HCT116 (cell line): ENCODE measurements at regions of chr9 and their contacts with region 1.

Region 1: GRCh38 chr9:4984621-4985385 is at the start of gene JAK2:
- DNase-seq: peak; percentile 80
- ATAC-seq: peak; percentile 89
- H3K4me3 ChIP-seq: peak within 1 kb of the TSS; percentile 67 to 68
- H3K27ac ChIP-seq: peak within 1 kb of the TSS; percentile 94
- H3K4me1 ChIP-seq: peaks cover 9 to 22% of the 10 kb centered on the region in 2 experiments
- H3K27me3 ChIP-seq: no peaks in the 10 kb centered on the region
- CTCF ChIP-seq: peak; percentile 4 to 25 (median 6); a peak in 1 of 6 replicates
- POLR2A ChIP-seq: peak; percentile 82
- RAD21 ChIP-seq: peak; percentile 48
- total RNA-seq, gene JAK2: 4.6 TPM

Region 2: DNA sequence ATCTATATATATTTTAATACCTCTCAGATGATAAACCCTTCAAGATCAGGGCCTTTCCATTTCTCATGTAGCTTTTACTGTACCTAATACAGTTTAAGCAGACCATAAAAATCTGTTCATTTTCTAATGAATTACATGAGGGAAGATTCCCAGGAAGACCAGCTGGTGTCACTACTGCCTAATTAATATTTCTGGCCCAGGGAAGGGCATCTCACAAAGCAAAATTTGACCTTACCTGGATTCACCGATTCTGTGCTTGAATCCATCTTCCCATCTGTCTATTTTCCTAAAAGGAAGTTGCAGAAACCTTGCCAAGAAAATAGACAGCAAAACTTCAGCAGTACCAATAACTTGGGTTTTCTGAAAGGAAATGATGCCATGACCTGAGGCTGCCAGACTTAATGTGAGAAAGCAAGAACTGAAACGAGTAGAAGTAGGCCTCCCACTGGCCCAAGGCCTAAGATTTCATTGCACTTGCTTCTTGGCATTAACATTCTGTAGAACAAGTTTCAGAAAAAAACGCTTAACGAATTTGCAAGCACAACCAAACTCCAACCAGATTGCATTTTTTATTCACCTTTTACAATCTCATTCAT is 602.0 kb before region 1 on chr9:
- CTCF ChIA-PET with region 1: no interaction called
- POLR2A ChIA-PET with region 1: no interaction called
- RAD21 ChIA-PET with region 1: no interaction called
- intact Hi-C with region 1: loop called (anchors 5 kb)
- DNase-seq: peak; percentile 23
- ATAC-seq: peak; percentile 75
- H3K4me3 ChIP-seq: no peak overlapping the region
- H3K27ac ChIP-seq: no peak overlapping the region
- H3K4me1 ChIP-seq: no peaks in the 10 kb centered on the region
- H3K27me3 ChIP-seq: no peaks in the 10 kb centered on the region; the same call in 1 of the 2 replicates
- CTCF ChIP-seq: peak; percentile 37 to 72 (median 70); a peak in 5 of 6 replicates
- POLR2A ChIP-seq: no peak
- RAD21 ChIP-seq: peak; percentile 86

Region 3: DNA sequence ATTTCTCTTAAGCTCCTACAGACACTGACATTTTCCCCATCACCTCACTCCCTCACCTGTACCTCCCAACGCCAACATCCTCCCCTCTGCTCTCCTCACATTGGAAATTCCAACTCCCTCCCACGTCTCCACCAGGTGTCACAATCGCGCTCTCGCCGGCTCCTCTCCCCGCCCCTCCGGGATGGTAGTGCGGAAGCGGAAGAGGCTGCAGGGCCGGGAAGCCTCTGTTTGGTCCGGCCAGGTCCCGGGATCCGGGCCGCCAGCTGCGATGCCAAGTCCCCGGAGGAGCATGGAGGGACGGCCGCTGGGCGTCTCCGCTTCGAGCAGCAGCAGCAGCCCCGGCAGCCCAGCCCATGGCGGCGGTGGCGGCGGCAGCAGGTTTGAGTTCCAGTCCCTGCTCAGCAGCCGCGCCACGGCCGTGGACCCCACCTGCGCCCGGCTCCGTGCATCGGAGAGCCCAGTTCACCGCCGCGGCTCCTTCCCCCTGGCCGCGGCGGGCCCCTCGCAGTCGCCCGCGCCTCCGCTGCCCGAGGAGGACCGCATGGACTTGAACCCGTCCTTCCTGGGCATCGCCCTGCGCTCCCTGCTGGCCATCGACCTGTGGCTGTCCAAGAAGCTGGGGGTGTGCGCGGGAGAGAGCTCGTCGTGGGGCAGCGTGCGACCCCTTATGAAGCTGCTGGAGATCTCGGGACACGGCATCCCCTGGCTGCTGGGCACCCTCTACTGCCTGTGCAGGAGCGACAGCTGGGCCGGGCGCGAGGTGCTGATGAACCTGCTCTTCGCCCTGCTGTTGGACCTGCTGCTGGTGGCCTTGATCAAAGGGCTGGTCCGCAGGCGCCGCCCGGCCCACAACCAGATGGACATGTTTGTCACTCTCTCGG is 322.5 kb before region 1 on chr9 and contains the start of gene PLPP6:
- CTCF ChIA-PET with region 1: no interaction called
- POLR2A ChIA-PET with region 1: no interaction called
- RAD21 ChIA-PET with region 1: no interaction called
- intact Hi-C with region 1: loop called (anchors 10 kb)
- DNase-seq: peak; percentile 80
- ATAC-seq: peak; percentile 94
- H3K4me3 ChIP-seq: peak within 1 kb of the TSS; percentile 75 to 77
- H3K27ac ChIP-seq: peak within 1 kb of the TSS; percentile 70
- H3K4me1 ChIP-seq: peaks cover 17 to 28% of the 10 kb centered on the region in 2 experiments
- H3K27me3 ChIP-seq: no peaks in the 10 kb centered on the region
- CTCF ChIP-seq: peak; percentile 33 to 50 (median 37); a peak in 5 of 6 replicates
- POLR2A ChIP-seq: no peak
- RAD21 ChIP-seq: peak; percentile 63
- total RNA-seq, gene PLPP6: 5.0 TPM

Region 4: DNA sequence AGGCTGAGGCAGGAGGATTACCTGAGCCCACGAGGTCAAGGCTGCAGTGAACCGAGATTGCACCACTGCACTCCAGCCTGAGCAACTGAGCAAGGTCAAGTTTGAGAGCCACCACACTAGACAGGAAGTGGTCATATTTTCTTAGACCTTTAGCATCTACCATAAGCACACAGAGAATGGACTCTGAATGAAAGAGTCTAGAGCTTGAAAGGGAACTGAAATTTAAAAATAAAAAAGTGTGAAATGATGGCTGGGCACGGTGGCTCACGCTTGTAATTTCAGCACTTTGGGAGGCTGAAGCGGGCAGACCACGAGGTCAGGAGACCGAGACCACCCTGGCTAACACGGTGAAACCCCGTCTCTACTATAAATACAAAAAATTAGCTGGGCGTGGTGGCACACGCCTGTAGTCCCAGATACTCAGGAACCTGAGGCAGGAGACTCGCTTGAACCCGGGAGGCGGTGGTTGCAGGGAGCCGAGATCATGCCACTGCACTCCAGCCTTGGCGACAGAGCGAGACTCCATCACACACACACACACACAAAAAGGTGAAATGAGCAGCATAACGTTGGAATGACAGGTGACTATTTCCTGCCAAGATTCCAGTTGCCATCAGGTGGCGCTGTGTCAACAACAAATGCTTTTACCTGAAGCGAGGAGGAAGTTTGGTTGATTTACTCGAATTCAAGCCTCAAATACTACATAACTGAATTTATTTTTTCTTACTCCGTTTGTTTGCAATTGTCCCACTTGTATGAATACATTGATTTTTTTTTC is 222.5 kb before region 1 on chr9:
- CTCF ChIA-PET with region 1: interaction called, 9 read pairs
- POLR2A ChIA-PET with region 1: interaction called, 4 read pairs
- RAD21 ChIA-PET with region 1: interaction called in 1 of 2 experiments, 3 read pairs
- intact Hi-C with region 1: loop called (anchors 2 kb)
- DNase-seq: peak; percentile 78
- ATAC-seq: peak; percentile 81
- H3K4me3 ChIP-seq: no peak overlapping the region
- H3K27ac ChIP-seq: no peak overlapping the region
- H3K4me1 ChIP-seq: peaks cover 0 to 13% of the 10 kb centered on the region in 2 experiments; a peak in 2 of 4 replicates
- H3K27me3 ChIP-seq: no peaks in the 10 kb centered on the region
- CTCF ChIP-seq: peak; percentile 82 to 89 (median 83)
- POLR2A ChIP-seq: no peak
- RAD21 ChIP-seq: peak; percentile 94

Region 5: GRCh38 chr9:4849364-4849763 is 135.4 kb before region 1 on chr9:
- CTCF ChIA-PET with region 1: no interaction called
- POLR2A ChIA-PET with region 1: no interaction called
- RAD21 ChIA-PET with region 1: no interaction called
- intact Hi-C with region 1: loop called (anchors 5 kb)
- DNase-seq: no peak
- ATAC-seq: no peak
- H3K4me3 ChIP-seq: no peak overlapping the region
- H3K27ac ChIP-seq: no peak overlapping the region
- H3K4me1 ChIP-seq: no peaks in the 10 kb centered on the region
- H3K27me3 ChIP-seq: no peaks in the 10 kb centered on the region
- CTCF ChIP-seq: peak in 1 of 3 experiments; percentile 18; a peak in 1 of 6 replicates
- POLR2A ChIP-seq: no peak
- RAD21 ChIP-seq: peak; percentile 22; the same call in 1 of the 2 replicates

Region 6: GRCh38 chr9:4905135-4905490 is 79.7 kb before region 1 on chr9:
- CTCF ChIA-PET with region 1: no interaction called
- POLR2A ChIA-PET with region 1: no interaction called
- RAD21 ChIA-PET with region 1: no interaction called
- intact Hi-C with region 1: no loop called
- DNase-seq: no peak
- ATAC-seq: no peak
- H3K4me3 ChIP-seq: no peak overlapping the region
- H3K27ac ChIP-seq: no peak overlapping the region
- H3K4me1 ChIP-seq: peaks cover 0 to 10% of the 10 kb centered on the region in 2 experiments; a peak in 1 of 4 replicates
- H3K27me3 ChIP-seq: no peaks in the 10 kb centered on the region
- CTCF ChIP-seq: no peak
- POLR2A ChIP-seq: no peak
- RAD21 ChIP-seq: no peak

Region 7: DNA sequence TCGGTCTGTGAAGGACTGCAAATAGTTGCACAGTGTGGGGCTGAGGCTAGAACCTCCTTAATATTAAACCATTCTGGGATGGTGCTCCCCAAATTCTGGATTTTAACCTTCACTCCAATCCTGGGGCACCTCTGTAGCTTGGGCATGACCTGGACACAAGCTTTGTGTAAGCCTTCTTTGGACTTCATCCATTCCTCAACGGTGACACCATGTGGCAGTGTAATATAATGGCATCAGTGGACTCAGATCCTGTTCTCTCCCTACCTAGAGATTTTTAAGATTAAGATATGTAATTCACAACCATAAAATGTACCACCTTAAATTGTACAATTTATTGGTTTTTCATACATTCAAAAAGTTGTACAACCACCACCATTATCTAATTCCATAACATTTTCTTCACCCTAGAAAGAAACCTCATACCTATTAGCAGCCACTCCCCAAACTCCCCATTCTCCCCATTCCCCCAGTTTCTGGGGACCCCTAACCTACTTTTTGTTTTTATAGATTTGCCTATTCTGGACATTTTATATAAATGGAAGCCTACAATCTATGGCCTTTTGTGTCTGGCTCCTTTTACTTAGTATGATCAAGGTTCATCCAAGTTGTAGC is 457.7 kb after region 1 on chr9:
- CTCF ChIA-PET with region 1: no interaction called
- POLR2A ChIA-PET with region 1: no interaction called
- RAD21 ChIA-PET with region 1: no interaction called
- intact Hi-C with region 1: loop called (anchors 5 kb)
- DNase-seq: no peak
- ATAC-seq: peak; percentile 54
- H3K4me3 ChIP-seq: no peak overlapping the region
- H3K27ac ChIP-seq: no peak overlapping the region
- H3K4me1 ChIP-seq: peaks cover 13 to 33% of the 10 kb centered on the region in 2 experiments
- H3K27me3 ChIP-seq: no peaks in the 10 kb centered on the region
- CTCF ChIP-seq: peak; percentile 46 to 68 (median 53); a peak in 5 of 6 replicates
- POLR2A ChIP-seq: no peak
- RAD21 ChIP-seq: peak; percentile 71

Region 8: GRCh38 chr9:5593904-5594303 is 609.1 kb after region 1 on chr9:
- CTCF ChIA-PET with region 1: no interaction called
- POLR2A ChIA-PET with region 1: no interaction called
- RAD21 ChIA-PET with region 1: no interaction called
- intact Hi-C with region 1: loop called (anchors 5 kb)
- DNase-seq: no peak
- ATAC-seq: no peak
- H3K4me3 ChIP-seq: no peak overlapping the region
- H3K27ac ChIP-seq: no peak overlapping the region
- H3K4me1 ChIP-seq: no peaks in the 10 kb centered on the region
- H3K27me3 ChIP-seq: no peaks in the 10 kb centered on the region
- CTCF ChIP-seq: no peak
- POLR2A ChIP-seq: no peak
- RAD21 ChIP-seq: no peak